IMR-90 (cell line): ENCODE measurements at regions of chr5 and their contacts with region 1.

Region 1: GRCh38 chr5:56279979-56280378 is 46.8 kb upstream of the ANKRD55 start:
- DNase-seq: peak; percentile 82
- ATAC-seq: peak; percentile 39
- H3K4me3 ChIP-seq: no peak overlapping the region
- H3K27ac ChIP-seq: peak overlapping the region; percentile 98
- H3K4me1 ChIP-seq: peaks cover 24% of the 10 kb centered on the region
- H3K27me3 ChIP-seq: no peaks in the 10 kb centered on the region
- CTCF ChIP-seq: no peak
- POLR2A ChIP-seq: no peak
- RAD21 ChIP-seq: no peak

Region 2: DNA sequence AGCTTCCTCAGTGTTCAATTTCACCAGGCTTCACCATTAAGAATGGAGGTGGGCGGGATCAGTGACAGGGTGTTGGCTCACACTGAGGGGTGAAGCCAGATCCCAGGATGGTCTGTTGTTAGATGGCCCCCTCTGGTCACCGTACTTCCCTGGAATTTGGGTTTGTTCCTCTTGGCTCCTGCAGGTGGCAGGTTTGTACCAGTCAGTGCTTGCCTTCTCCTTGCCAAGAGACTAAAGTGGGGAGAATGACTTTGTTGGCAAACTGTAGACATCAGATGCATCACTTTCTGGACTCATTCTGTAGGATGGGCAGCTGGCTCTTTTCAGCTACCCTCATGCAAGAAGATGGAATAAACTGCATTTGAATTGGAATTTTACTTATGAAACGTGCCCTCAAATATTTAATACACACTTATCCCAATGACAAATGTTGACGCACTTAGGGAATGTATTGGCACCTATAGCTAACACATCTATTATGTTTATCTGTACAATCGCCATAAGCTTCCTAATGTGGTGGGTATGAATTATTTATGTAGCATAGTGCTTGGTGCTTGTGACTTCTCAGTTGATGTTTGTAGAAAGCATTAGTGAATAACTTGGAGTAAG is 15.5 kb before region 1 on chr5:
- CTCF ChIA-PET with region 1: no interaction called
- POLR2A ChIA-PET with region 1: no interaction called
- dilution Hi-C with region 1: no loop called
- in situ Hi-C with region 1: no loop called
- intact Hi-C with region 1: no loop called
- DNase-seq: peak; percentile 54
- ATAC-seq: peak; percentile 33; the same call in 1 of the 2 replicates
- H3K4me3 ChIP-seq: no peak overlapping the region
- H3K27ac ChIP-seq: no peak overlapping the region
- H3K4me1 ChIP-seq: peaks cover 8% of the 10 kb centered on the region
- H3K27me3 ChIP-seq: no peaks in the 10 kb centered on the region
- CTCF ChIP-seq: peak; percentile 45
- POLR2A ChIP-seq: no peak
- RAD21 ChIP-seq: peak; percentile 51

Region 3: DNA sequence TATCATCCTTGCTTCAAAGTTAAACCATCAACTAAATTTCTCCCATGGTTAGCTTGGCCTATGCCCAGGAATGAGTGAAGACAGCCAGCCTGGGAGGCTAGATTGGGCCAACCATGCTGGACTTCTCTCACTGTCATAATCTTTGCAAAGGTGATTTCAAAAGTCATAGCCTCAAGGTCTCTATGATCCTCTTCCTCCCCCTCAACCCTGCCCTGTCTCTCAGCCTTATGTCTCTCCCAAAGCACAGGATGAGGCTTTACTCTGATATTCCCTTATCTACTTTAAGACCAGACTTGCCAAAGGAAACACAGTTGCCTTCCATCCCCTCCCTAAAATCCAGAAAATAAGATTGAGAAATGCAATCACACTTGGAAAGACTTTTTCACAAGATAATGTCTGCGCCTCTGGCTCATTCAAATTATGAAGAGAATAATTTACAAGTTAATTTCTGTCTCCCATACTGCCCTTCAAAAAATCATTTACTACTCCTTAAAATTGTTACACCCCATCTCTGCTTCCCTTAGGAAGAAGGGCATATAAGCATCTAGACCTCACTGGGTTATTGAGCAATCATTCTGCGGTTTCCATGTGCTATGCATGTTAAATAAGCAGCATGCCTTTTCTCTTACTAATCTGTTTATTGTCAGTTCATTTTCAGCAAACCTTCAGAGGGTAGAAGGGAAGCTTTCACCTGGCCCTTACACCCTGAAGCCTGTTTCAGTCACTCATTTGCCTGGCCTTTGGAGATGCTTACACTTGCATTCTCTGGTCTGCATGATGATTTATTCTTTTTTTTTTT is 67.0 kb after region 1 on chr5:
- CTCF ChIA-PET with region 1: no interaction called
- POLR2A ChIA-PET with region 1: no interaction called
- dilution Hi-C with region 1: no loop called
- in situ Hi-C with region 1: no loop called
- intact Hi-C with region 1: loop called (anchors 5 kb)
- DNase-seq: peak; percentile 98
- ATAC-seq: peak; percentile 66
- H3K4me3 ChIP-seq: no peak overlapping the region
- H3K27ac ChIP-seq: peak overlapping the region; percentile 98
- H3K4me1 ChIP-seq: peaks cover 18% of the 10 kb centered on the region
- H3K27me3 ChIP-seq: no peaks in the 10 kb centered on the region
- CTCF ChIP-seq: no peak
- POLR2A ChIP-seq: no peak
- RAD21 ChIP-seq: no peak

Region 4: DNA sequence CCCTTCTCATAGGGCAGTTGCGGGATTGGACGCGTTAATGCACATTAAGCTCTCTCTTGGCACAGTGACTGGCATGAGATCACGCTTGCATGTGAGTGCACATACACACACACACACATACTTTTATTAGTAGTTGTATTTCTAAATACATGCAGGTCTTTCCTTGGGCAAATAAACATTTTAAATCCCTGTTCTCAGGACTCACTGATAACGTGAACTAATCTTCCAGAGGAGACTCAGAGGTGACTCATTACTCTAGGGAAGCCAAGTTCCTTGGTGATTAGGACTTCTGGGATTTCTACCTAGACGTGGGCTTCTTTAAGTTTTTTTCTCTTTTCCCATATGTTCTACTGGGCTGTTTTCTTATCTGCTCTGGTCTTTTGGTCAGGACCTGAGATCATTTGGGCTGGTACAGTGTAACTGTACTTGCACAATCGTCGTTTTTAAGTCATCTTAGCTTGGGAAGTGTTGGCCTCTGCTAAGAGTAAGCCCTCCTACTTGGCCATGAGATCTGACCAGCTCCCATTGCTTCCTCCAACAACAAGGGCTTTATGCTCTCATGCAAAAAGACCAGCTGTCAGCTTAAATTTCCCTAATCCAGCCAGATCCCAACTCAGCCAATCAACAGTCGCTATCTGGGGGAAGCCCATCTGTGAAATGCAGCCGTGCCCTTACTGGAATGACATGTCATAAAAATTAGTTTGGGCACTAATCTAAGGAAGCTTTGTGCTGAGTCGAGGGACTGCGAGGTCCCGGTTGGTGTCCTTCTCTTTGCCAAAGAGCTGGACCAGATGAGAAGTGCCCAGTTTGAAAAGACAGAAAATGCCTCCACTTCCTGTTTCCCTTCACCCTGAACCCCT is 129.6 kb after region 1 on chr5:
- CTCF ChIA-PET with region 1: no interaction called
- POLR2A ChIA-PET with region 1: no interaction called
- dilution Hi-C with region 1: no loop called
- in situ Hi-C with region 1: no loop called
- intact Hi-C with region 1: loop called (anchors 1 kb)
- DNase-seq: peak; percentile 99
- ATAC-seq: peak; percentile 90
- H3K4me3 ChIP-seq: no peak overlapping the region
- H3K27ac ChIP-seq: peak overlapping the region; percentile 64
- H3K4me1 ChIP-seq: peaks cover 14% of the 10 kb centered on the region
- H3K27me3 ChIP-seq: no peaks in the 10 kb centered on the region
- CTCF ChIP-seq: no peak
- POLR2A ChIP-seq: no peak
- RAD21 ChIP-seq: peak; percentile 25

Region 5: DNA sequence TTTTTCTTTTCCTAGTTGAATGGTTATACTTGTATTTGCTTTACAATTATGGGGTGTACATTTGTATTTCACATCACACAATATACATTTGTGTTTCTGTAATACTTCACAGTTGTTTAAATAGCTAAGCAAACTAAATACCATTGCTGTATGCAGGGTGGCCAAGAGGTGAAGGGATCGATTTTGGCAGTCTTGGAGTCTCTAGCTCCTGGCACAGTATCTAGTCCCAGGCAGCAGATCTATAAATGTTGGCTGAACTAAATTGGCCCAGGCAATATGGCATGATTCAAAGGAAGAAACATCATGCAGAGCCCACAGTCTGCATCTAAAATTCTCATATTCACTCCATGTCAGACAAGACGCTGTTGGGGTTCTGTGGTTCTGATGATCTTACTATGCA is 783.8 kb after region 1 on chr5:
- CTCF ChIA-PET with region 1: no interaction called
- POLR2A ChIA-PET with region 1: interaction called, 10 read pairs
- dilution Hi-C with region 1: no loop called
- in situ Hi-C with region 1: no loop called
- intact Hi-C with region 1: no loop called
- DNase-seq: no peak
- ATAC-seq: no peak
- H3K4me3 ChIP-seq: no peak overlapping the region
- H3K27ac ChIP-seq: no peak overlapping the region
- H3K4me1 ChIP-seq: peaks cover 4% of the 10 kb centered on the region
- H3K27me3 ChIP-seq: peaks cover 4% of the 10 kb centered on the region
- CTCF ChIP-seq: no peak
- POLR2A ChIP-seq: no peak
- RAD21 ChIP-seq: no peak

Region 6: GRCh38 chr5:57931807-57932206 is 1651.8 kb after region 1 on chr5:
- CTCF ChIA-PET with region 1: no interaction called
- POLR2A ChIA-PET with region 1: no interaction called
- dilution Hi-C with region 1: no loop called
- in situ Hi-C with region 1: no loop called
- intact Hi-C with region 1: no loop called
- DNase-seq: no peak
- ATAC-seq: no peak
- H3K4me3 ChIP-seq: no peak overlapping the region
- H3K27ac ChIP-seq: no peak overlapping the region
- H3K4me1 ChIP-seq: no peaks in the 10 kb centered on the region
- H3K27me3 ChIP-seq: no peaks in the 10 kb centered on the region
- CTCF ChIP-seq: no peak
- POLR2A ChIP-seq: no peak
- RAD21 ChIP-seq: no peak